ENCODE measurements at regions of chr22 and their contacts with region 1.

Region 1: GRCh38 chr22:21001560-21002325 is at the start of gene THAP7:
- DNase-seq: peak; percentile 97
- H3K4me3 Mint-ChIP-seq: peak within 1 kb of the TSS; percentile 92
- H3K27ac Mint-ChIP-seq: peak within 1 kb of the TSS; percentile 90
- H3K4me1 Mint-ChIP-seq: peaks cover 34% of the 10 kb centered on the region
- H3K27me3 Mint-ChIP-seq: no peaks in the 10 kb centered on the region
- total RNA-seq, gene THAP7: 24.7 to 25.4 TPM

Region 2: DNA sequence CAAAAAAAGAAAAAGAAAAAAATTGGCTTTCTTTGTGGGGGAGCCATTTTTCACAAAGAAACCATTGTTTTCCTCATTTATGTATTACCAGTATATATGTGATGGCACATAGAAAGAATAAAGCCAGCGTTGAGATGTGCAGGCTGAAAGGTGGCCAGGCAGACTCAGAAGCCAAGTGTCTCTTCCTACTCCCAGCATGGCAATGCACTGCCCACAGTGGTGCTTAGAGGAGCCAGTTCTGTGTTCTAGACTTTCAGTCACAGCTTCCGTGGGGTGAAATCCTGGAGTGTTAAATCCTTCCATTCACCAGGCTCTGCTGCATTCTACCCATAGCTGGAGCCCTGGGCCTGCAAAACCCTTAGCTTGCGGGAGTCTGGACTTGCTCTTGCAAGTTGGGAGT is 124.0 kb before region 1 on chr22:
- CTCF ChIA-PET with region 1: no interaction called
- POLR2A ChIA-PET with region 1: no interaction called
- DNase-seq: no peak
- H3K4me3 Mint-ChIP-seq: no peak overlapping the region
- H3K27ac Mint-ChIP-seq: no peak overlapping the region
- H3K4me1 Mint-ChIP-seq: peaks cover 4% of the 10 kb centered on the region
- H3K27me3 Mint-ChIP-seq: no peaks in the 10 kb centered on the region

Region 3: DNA sequence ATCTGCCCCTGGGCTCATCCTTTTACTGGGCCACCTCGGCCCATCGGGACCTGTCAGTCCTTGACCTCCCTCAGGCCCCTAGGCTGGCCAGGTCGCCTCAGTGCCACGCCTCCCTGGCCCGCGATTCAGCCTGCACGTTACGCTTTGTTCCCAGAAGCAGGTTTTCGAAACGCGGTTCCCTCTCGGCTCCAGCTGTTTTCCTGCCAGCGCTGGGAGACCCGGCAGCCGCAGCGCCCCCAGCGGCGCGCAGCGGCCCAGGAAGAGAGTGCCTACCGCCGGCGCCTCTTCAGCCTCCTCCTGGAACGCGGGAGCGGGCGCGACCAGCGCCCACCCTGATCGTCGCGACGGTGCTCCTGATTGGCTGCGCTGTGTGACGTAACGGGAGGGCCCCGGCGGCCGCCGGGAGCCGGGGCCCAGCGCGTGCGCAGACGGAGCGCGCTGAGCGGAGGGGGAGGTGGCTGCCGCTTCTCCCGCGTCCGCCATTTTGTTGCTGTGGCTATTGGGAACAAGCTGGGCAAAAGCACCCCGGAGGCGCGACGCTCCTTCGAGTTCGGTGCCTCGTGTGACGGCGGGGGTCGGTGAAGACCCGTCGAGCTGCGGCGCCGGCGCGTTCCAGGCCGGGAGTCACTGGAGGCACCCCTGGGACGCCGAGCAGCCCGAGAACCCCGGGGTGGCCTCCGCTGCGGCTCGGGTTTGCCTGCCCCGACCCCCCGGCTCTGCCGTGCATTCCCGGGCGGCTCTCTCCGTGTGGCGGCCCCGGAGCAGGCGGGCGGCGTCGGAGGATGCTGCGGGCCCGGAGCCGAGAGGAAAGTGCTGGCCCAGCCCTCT is 84.5 kb before region 1 on chr22 and contains the start of gene CRKL:
- CTCF ChIA-PET with region 1: interaction called, 4 read pairs
- POLR2A ChIA-PET with region 1: interaction called, 13 read pairs
- DNase-seq: peak; percentile 97
- H3K4me3 Mint-ChIP-seq: peak within 1 kb of the TSS; percentile 99
- H3K27ac Mint-ChIP-seq: peak within 1 kb of the TSS; percentile 89
- H3K4me1 Mint-ChIP-seq: peaks cover 36% of the 10 kb centered on the region
- H3K27me3 Mint-ChIP-seq: peaks cover 2% of the 10 kb centered on the region
- total RNA-seq, gene CRKL: 84.8 to 88.2 TPM

Region 4: DNA sequence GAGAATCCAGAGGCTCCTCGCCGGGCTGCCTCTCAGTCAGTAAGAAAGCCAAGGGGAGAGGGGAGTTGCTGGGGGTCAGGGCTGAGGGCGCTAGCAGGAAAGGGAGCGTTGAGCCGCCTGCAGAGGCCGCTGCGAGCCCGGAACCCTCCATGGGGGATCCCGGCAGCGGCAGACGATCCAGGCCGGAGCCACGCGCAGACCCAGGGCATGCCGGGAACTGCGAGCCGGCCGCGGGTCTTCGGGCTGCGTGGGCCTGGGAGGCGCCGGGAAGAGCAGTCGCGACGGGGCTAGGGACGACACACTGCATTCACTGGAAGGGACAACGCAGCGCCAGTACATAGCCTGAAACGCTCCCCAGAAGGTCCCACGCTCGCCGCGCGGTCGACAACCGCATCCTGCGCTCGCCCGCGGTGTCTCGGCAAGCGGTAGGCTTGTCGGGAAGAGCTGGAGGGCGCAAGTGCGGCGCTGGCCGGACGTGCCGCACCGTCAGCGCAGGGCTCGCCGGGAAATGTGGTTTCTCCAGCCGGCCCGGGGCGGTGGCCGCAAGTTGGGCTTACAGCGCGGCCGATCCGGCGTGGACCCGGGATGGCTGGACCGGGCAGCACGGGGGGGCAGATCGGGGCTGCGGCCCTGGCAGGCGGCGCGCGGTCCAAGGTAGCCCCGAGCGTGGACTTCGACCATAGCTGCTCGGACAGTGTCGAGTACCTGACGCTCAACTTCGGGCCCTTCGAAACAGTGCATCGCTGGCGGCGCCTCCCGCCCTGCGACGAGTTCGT is 19.8 kb before region 1 on chr22 and contains the start of gene LZTR1:
- CTCF ChIA-PET with region 1: interaction called, 7 read pairs
- POLR2A ChIA-PET with region 1: interaction called, 48 read pairs
- DNase-seq: peak; percentile 85
- H3K4me3 Mint-ChIP-seq: peak within 1 kb of the TSS; percentile 89
- H3K27ac Mint-ChIP-seq: peak within 1 kb of the TSS; percentile 83
- H3K4me1 Mint-ChIP-seq: peaks cover 39% of the 10 kb centered on the region
- H3K27me3 Mint-ChIP-seq: no peaks in the 10 kb centered on the region
- total RNA-seq, gene LZTR1: 53.3 to 60.3 TPM

Region 5: DNA sequence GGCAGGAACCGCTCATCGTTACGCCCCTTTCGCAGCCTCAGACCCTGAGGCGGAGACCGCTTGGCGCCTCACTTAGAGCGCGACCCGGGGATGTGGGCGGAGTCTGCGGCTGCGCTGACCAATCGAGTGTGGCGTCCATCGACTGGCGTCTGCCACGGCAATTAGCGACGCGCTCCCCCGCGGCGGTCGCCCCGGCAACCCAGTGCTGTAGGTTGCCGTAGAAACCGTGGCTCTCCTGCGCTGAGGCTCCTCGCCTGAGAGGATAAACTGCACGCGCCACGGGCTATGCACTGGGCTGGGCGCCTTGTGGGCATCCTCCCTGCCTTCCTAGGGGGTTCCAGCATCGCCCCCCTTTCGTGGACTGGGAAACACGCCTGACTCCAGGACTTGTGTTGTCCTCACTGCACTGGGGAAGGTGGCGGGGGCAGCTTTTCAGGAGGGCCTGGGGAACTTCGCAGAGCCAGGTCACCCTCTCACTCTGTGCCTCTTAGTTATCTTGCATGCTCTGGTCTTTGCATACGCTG is 12.5 kb after region 1 on chr22:
- CTCF ChIA-PET with region 1: no interaction called
- POLR2A ChIA-PET with region 1: interaction called, 12 read pairs
- DNase-seq: peak; percentile 85
- H3K4me3 Mint-ChIP-seq: peak overlapping the region; percentile 71
- H3K27ac Mint-ChIP-seq: no peak overlapping the region
- H3K4me1 Mint-ChIP-seq: peaks cover 15% of the 10 kb centered on the region
- H3K27me3 Mint-ChIP-seq: peaks cover 5% of the 10 kb centered on the region

Region 6: DNA sequence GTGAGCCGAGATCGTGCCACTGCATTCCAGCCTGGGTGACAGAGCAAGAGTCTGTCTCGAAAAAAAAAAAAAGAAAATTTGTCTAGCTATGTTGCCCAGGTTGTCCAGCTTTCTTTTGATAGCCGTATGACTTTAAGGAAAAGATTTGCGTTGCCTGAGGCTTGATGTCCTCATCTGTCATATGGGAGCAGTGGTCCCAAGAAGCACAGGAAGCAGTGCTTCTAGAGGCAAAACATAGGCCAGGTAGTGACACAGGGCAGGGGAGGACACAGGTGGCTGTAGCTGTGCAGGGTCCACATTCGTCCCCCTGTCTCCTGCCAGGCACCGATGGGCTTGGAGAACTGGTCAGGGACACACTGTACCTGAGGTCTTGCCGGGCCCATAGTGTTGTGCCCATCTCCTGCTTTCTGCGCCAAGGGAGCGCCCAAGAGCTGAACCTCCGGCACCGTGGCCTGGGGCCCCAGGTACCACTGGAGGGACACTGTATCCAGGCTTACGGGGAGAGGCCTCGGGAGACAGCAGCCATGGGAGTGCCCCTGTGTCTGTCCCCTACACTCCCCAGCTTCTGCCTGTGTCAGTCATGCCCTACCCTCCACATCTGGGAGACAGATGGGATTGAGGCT is 45.4 kb after region 1 on chr22:
- CTCF ChIA-PET with region 1: no interaction called
- POLR2A ChIA-PET with region 1: no interaction called
- DNase-seq: no peak
- H3K4me3 Mint-ChIP-seq: no peak overlapping the region
- H3K27ac Mint-ChIP-seq: no peak overlapping the region
- H3K4me1 Mint-ChIP-seq: peaks cover 33% of the 10 kb centered on the region
- H3K27me3 Mint-ChIP-seq: peaks cover 19% of the 10 kb centered on the region

Measured in activated CD4-positive, alpha-beta memory T cell treated with anti-CD3 and anti-CD28 coated beads, Interleukin-2, amount 10 ng/mL, durations not matched to agents 7 days and 5 days (primary cell).